Aorta (tissue), 5 donors: ENCODE measurements at regions of chr2 and their contacts with region 1.

Region 1: DNA sequence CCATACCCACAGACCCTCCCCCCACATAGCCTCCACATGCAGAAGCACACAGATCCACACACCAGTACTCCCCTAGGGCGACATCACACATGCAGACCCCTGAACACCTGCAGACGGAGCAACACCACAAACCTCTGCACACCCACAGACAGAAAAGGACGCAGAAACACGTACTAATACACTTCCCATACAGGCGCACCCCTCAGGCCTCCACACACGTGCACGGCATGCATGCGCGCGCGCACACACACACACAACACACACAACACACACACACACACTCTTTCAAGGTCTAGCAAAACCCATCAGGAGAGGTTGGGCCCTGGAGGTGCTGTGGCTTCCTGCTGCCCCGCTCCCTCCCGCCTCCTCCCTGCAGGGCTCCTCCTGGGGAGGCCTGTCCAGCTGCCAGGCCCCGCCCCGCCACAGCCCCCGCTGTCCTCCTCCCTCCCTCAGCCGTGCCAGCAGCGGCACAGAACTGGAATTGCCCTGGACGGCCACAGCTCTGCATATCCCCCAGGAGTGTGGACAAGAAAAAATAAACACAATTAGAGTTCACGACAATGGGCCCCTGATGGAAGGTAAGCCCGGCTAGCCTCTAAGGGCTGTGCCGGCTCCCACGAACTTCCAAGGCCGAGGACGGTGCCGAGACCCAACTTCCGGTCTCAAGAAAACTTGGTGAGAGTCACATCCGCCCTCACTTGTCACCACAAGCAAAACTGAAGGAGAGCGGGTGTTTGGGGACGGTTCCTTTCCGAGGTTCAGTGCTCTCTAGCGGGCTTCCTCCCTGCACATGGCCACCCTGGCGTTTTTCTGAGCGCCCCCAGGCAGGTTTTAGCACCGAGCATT is 6.8 kb downstream of the ZFP36L2 start:
- DNase-seq: peak; percentile 94 to 95
- ATAC-seq: peak; percentile 81
- H3K4me3 ChIP-seq: no peak overlapping the region
- H3K27ac ChIP-seq: peak overlapping the region; percentile 89 to 94
- H3K4me1 ChIP-seq: no peaks in the 10 kb centered on the region
- H3K27me3 ChIP-seq: no peaks in the 10 kb centered on the region

Region 2: GRCh38 chr2:42828487-42829425 is 390.9 kb before region 1 on chr2:
- intact Hi-C with region 1: loop called in 1 of 2 experiments (anchors 2 kb)
- DNase-seq: peak; percentile 84 to 90
- ATAC-seq: peak; percentile 94
- H3K4me3 ChIP-seq: no peak overlapping the region
- H3K27ac ChIP-seq: no peak overlapping the region
- H3K4me1 ChIP-seq: no peaks in the 10 kb centered on the region
- H3K27me3 ChIP-seq: no peaks in the 10 kb centered on the region

Region 3: GRCh38 chr2:42974721-42975717 is 244.6 kb before region 1 on chr2:
- intact Hi-C with region 1: no loop called
- DNase-seq: peak; percentile 90 to 93
- ATAC-seq: peak; percentile 93
- H3K4me3 ChIP-seq: peak overlapping the region in 1 of 2 donors; percentile 53
- H3K27ac ChIP-seq: no peak overlapping the region
- H3K4me1 ChIP-seq: no peaks in the 10 kb centered on the region
- H3K27me3 ChIP-seq: no peaks in the 10 kb centered on the region

Region 4: DNA sequence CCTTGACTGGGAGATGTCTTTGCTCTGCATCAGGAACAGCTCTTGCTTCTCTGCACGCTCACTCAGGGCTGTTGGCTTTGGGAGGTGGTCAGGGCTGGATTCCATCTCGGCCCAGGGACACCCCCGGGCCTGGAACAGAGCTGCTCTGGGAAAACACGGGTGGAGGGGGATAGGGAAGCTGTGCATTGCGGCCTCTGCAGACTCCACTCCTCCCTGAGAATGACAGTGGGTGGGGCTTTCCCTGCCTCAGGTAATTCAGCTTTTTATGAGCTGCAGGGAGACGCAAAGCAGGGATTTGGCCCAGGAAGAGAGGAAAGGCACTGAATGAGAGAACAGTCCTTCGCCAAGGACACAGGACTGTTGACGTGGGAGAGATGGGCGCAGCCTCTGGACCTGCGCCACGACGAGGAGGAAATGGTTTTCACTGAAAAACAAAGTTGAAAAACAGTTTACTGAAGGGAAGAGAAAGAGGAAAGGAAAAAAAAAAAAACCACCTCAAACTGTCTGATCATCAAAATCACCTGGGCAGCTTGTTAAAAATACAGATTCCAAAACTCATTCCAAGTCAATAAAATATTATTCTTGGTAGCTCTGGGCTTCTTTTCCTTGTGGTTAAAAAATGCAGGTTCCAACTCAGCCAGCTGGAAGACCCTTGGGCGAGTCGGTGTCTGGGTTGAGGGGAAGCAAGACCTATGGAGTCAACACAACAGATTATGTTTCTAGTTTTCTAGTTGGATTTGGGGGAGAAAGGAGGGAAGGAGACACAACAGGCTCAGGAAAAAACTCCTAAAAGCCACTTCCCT is 187.2 kb before region 1 on chr2:
- intact Hi-C with region 1: no loop called
- DNase-seq: peak in 1 of 2 donors; percentile 70
- ATAC-seq: peak; percentile 70
- H3K4me3 ChIP-seq: no peak overlapping the region
- H3K27ac ChIP-seq: peak overlapping the region in 1 of 2 donors; percentile 43
- H3K4me1 ChIP-seq: no peaks in the 10 kb centered on the region
- H3K27me3 ChIP-seq: no peaks in the 10 kb centered on the region

Region 5: GRCh38 chr2:43075054-43075593 is 144.5 kb before region 1 on chr2:
- intact Hi-C with region 1: loop called in 1 of 2 experiments (anchors 2 kb)
- DNase-seq: peak; percentile 92
- ATAC-seq: peak; percentile 86
- H3K4me3 ChIP-seq: no peak overlapping the region
- H3K27ac ChIP-seq: peak overlapping the region; percentile 87 to 89
- H3K4me1 ChIP-seq: no peaks in the 10 kb centered on the region
- H3K27me3 ChIP-seq: no peaks in the 10 kb centered on the region

Region 6: DNA sequence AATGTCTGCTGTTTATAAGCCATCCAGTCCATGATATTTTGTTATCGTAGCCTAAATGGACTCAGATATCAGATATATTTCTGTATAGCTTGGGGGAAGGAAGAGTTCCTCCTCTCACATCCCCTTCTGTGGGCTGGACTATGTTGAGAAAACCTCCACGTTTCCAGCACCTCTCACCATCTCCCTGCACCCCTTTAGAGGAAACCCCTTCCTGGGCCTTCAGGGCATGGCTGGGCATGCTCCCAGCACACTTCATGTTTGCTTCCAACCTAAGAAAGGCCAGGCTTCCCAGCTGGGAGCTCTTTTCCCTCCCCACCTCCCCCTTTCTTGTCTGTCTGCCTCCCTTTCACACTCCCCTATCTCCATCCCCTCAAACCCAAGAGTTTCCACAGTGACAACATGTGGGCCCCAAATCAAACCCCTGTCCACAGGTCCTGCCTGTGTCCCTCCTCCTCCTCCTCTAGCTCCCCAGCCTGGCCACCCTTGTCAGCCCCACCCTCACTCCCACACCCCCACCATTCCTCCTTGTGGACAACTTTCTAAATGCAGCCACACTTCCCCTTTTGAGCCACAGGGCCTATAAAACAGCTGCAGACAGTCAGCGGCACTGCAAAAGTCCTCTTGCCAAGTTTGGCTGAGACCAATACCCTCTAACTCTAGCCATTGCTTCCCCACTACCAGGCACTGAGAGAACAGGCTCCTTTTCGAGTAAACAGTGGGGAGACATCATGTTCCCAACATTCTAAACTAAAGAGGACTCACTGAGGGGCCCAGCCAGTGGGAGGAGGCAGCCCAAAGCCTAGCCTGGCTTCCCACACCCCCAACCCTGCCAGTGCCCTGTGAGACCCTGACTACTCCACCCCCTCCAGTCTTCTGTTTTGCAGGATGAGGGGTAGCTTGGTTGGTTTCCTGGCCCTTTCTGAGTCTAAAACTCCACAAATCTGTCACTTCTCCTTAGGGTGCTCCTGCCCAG is 113.7 kb before region 1 on chr2:
- intact Hi-C with region 1: loop called in 1 of 2 experiments (anchors 10 kb)
- DNase-seq: peak in 1 of 2 donors; percentile 82
- ATAC-seq: peak; percentile 36
- H3K4me3 ChIP-seq: no peak overlapping the region
- H3K27ac ChIP-seq: no peak overlapping the region
- H3K4me1 ChIP-seq: no peaks in the 10 kb centered on the region
- H3K27me3 ChIP-seq: no peaks in the 10 kb centered on the region

Region 7: DNA sequence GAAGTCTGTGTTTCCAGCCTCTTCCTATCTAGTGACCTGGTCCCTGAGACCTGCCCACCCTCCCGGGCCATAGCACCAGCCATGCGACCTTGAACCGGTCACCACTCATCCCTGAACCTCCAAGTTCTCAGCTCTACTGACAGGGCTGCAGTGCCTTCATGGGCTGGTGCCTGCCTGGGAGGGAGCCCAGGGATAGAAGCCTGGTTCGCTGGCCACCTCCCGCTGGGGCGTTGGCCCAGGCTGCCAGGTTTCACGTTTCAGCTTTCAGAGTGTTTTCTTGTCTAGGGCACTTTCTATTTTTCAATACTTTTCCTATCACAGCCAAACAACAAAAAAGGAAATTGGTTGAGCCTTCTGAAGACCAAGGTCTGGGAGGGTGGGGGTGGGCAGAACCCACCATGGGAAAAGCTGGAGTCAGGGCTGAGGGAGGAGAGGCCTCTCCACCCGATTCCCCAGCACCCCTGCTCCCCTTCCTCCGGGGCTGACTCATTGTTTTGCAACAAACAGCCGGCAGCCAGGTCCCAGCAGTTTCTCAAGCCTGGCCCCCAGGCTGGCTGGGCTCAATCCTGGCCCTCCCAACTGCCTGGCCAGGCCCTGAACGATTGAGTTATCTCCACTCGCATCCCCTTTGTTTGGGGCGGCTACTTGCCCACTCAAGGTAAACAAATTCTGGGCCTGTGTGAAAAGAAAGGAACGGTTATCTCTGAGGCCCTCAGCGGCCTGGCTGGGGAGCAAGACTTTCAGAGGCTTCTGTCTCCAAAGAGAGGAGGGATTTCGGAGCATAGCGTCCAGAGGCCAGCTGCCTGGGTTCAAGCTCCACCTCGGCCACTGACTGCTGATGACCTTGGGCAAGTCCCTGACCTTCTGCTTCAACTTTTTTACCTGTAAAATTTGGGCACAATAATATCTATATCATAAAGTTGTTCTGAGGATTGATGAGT is 40.7 kb before region 1 on chr2:
- intact Hi-C with region 1: loop called in 1 of 2 experiments (anchors 5 kb)
- DNase-seq: peak; percentile 87 to 89
- ATAC-seq: peak; percentile 90
- H3K4me3 ChIP-seq: no peak overlapping the region
- H3K27ac ChIP-seq: peak overlapping the region in 1 of 2 donors; percentile 95
- H3K4me1 ChIP-seq: no peaks in the 10 kb centered on the region
- H3K27me3 ChIP-seq: no peaks in the 10 kb centered on the region

Region 8: DNA sequence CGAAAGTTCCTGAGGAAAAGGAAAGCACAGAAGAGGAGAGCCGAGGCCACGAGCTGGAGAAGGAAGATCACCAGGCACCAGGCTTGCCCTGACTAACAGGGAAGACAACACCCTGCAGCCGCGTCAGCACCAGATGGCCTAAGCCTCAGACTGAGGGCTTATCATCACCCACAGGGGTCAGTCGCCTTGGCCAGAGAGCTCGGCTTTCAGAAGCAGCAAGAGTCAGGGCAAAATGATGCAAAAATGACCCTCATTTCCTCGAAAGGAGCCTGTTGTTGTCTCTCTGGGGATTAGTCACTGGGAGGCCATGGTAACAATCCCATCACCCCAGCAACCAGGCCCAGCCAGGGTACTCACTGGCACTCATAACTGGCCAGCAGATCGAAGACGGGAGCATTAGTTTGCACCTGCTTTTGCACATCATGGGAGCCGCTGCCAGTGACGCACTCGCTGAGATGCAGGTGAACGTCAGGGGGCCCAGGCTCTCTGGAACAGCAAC is 49.5 kb after region 1 on chr2:
- intact Hi-C with region 1: no loop called
- DNase-seq: peak; percentile 91 to 94
- ATAC-seq: peak; percentile 78
- H3K4me3 ChIP-seq: no peak overlapping the region
- H3K27ac ChIP-seq: peak overlapping the region in 1 of 2 donors; percentile 49
- H3K4me1 ChIP-seq: peaks cover 0 to 8% of the 10 kb centered on the region in 2 donors
- H3K27me3 ChIP-seq: no peaks in the 10 kb centered on the region

Region 9: DNA sequence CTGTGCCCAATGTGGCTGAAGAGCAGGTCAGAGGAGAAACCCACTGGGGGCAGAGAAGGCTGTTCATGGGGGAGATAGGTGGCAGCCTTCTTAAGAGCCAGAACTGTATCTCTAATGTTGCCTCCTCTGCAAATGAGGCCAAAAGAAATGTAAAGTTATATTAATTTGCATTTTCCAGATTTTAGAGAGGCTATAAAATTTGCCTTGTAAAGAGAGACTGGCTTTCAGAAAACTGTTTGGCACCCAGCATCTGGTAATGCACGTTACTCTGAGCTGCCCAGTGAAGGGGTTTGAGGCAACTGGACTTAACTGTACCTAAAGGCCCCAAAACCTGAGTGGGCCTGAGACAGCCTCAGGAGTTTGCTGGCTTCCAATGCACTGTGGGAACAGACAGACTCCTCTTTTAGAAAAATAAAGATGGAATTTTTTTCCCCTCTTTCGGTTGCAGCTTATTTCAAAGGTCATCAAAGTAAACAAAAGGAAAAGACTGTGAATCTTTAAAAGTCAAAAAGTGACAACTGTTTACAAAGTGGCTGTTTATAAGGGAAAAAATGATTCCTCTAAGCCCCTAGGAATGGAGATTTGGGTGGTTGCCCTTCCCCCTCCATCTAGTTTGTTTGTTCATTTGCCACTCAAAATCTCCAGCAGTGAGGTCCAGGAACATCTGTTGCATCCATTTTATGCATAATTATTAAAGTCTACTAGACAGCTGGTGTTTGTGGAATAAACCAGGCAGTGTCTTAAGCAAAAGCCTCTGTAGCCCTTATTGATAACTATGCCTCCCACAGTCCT is 139.0 kb after region 1 on chr2:
- intact Hi-C with region 1: no loop called
- DNase-seq: no peak
- ATAC-seq: no peak
- H3K4me3 ChIP-seq: no peak overlapping the region
- H3K27ac ChIP-seq: no peak overlapping the region
- H3K4me1 ChIP-seq: peaks cover 0 to 1% of the 10 kb centered on the region in 2 donors
- H3K27me3 ChIP-seq: no peaks in the 10 kb centered on the region